Activated CD8-positive, alpha-beta T cell treated with anti-CD3 and anti-CD28 coated beads, Interleukin-2, amount 10 ng/mL, durations not matched to agents 7 days and 5 days (primary cell): ENCODE measurements at regions of chr1 and their contacts with region 1.

Region 1: DNA sequence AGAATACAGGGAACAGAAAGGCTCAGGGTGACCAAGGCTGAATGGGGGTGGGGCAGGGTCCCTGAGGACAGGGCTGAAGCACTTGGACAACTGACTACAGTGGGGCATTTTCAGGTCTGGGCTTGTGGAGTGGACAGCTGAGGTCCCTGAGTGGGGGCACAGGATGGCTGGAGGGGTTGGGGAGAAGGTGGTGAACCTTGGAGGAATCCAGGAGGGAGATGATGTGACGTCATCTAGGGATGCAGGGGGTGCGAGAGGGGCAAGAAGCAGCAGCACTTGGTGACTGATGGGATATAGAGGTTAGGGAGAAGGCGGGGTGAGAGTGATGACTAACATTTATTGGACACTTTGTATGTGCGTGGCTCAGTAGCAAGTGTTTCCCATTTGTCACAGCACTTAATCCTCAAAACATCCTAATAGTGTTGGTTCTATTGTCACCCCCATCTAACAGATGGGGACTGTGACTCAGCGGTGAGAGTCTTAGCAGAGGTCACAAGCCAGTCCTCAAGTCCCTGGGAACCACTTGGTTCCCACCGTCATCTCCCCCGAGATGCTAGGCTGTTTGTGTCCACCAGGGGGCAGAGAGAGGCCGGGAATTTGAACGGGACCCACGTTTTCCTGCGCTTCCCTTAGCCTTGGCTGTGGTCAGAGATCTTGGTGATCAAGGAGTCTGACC is 27.9 kb upstream of the BMP8B start:
- DNase-seq: peak; percentile 63
- ATAC-seq: peak; percentile 71
- H3K4me3 Mint-ChIP-seq: peak overlapping the region; percentile 44
- H3K27ac Mint-ChIP-seq: no peak overlapping the region
- H3K4me1 Mint-ChIP-seq: peaks cover 7% of the 10 kb centered on the region
- H3K27me3 Mint-ChIP-seq: peaks cover 30% of the 10 kb centered on the region

Region 2: DNA sequence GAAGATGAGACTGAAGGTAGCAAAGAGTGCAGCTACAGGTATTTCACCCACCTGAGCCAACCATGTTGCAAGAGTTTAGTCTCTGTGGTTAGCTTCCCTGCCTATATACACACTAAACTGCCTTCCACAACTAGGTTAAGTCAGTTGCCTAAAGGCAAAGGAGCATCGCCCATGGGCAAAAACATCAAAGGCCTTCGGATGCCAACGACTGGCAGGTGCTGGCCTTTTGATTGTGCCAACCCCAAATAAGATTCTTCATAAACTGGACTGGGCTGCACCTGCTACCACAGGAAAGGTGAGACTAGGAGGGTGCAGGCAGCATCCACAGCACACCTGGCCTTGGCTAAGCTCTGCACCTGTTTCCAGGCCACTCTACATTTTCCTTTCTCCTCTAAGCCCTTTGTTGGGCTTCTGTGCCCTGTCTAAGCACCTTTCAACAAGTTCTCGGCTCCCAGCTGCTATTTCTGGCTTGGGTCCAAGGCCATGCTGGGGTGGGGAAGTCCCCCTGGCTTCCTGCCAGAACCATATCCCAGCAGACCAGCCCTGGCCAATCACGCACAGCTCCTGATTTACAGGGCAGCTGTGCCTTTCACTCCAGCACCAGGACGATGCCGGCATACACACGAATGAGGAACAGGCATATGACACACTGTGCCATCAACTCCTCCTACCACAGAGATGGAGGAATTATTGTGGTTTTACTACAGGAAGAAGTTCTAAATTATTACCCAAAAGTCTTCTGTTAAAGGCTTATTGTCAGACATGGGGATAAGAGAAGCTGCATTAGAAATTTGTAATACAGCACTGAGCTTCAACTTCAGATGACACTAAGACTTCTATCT is 28.9 kb after region 1 on chr1:
- CTCF ChIA-PET with region 1: interaction called, 11 read pairs
- POLR2A ChIA-PET with region 1: interaction called, 3 read pairs
- DNase-seq: peak; percentile 63
- ATAC-seq: peak; percentile 86
- H3K4me3 Mint-ChIP-seq: no peak overlapping the region
- H3K27ac Mint-ChIP-seq: peak overlapping the region; percentile 73
- H3K4me1 Mint-ChIP-seq: peaks cover 38% of the 10 kb centered on the region
- H3K27me3 Mint-ChIP-seq: no peaks in the 10 kb centered on the region

Region 3: DNA sequence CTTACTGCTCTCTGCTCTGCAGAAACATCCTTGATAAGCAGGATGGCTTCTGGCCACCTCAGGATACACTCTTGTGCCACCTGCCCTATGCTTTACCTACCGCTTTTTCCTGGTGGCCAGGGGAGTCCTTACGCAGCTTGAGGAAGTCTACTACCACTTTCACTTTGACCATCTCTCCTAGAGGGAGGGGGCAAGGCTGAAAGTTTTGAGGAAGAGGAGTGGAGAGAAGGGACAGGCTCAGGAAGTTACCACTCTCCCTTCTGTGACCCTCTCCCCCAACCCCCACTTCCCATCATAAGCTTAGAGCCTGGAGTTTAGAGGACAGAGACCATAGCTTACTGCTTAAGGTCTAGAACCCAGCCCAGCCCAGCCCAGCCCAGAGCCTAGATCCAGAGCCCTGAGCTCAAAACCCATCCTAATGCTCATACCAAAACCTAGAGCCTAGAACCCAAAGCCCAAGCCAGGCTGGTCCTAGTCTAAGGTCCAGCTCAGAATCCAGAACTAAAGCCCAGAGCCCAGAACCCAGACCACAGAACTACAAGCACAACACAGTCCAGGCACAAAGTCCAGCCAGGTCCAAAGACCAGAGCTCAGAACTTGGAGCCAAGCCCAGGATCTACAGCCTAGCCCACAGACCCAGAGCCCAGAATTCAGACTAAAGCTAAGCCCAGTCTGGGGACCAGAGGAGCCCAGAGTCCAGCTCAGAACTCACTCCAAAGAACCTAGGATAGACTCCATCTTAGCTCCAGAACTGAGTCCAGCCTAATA is 120.4 kb after region 1 on chr1:
- CTCF ChIA-PET with region 1: no interaction called
- POLR2A ChIA-PET with region 1: no interaction called
- DNase-seq: no peak
- ATAC-seq: no peak
- H3K4me3 Mint-ChIP-seq: no peak overlapping the region
- H3K27ac Mint-ChIP-seq: no peak overlapping the region
- H3K4me1 Mint-ChIP-seq: peaks cover 2% of the 10 kb centered on the region
- H3K27me3 Mint-ChIP-seq: no peaks in the 10 kb centered on the region